GM18951 (cell line): ENCODE measurements at regions of chr1 and their contacts with region 1.

Region 1: GRCh38 chr1:48109390-48110013 is 112.3 kb upstream of the TRABD2B start:
- POLR2A ChIP-seq: no peak

Region 2: GRCh38 chr1:48048064-48048463 is 61.4 kb before region 1 on chr1:
- in situ Hi-C with region 1: no loop called
- POLR2A ChIP-seq: no peak

Region 3: GRCh38 chr1:48202030-48202752 is 92.7 kb after region 1 on chr1:
- in situ Hi-C with region 1: loop called (anchors 10 kb)
- POLR2A ChIP-seq: no peak

Region 4: GRCh38 chr1:48266576-48266975 is 157.1 kb after region 1 on chr1:
- in situ Hi-C with region 1: no loop called
- POLR2A ChIP-seq: no peak

Region 5: DNA sequence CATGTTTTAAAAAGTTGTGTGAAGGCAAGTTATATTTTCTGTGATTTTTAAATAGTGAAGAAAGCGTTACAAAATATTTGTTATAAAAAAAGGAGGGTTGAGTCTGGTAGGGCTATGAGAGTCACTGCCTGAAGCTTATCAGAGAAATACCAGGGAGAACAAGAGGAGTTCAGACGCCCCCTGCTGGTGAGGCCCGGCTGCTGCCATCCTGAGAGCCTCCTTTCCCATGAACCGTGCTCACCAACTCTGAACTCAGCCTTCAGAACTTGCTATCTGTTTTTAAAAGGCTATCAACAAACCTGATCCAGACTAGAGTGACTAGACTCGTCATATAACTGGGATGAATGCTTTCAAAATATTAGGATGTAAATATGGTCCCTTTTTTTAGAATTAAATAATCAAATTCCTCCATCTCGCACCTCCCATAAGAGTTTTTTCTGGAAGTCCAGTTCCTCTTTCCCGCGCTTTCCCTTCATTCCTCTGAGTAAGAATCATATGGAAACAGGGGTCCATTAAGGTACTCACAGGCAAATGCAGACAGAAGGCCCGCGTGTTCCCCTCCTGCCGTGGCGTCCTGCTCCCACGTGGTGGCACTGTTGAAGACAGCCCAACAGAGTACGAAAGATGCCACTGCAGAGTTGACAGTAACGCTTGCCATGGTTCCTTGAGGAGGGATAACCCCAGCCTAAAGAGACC is 388.7 kb after region 1 on chr1:
- in situ Hi-C with region 1: loop called (anchors 25 kb)
- POLR2A ChIP-seq: no peak